ENCODE measurements at regions of chr9 and their contacts with region 1.

Region 1: GRCh38 chr9:33403941-33404787 is 1.8 kb upstream of the AQP7 start:
- DNase-seq: no peak

Region 2: GRCh38 chr9:33187519-33188218 is 216.5 kb before region 1 on chr9:
- CTCF ChIA-PET with region 1: no interaction called
- POLR2A ChIA-PET with region 1: no interaction called
- DNase-seq: no peak

Region 3: GRCh38 chr9:33466565-33467495 is 62.7 kb after region 1 on chr9:
- CTCF ChIA-PET with region 1: interaction called, 12 read pairs
- POLR2A ChIA-PET with region 1: interaction called, 3 read pairs
- DNase-seq: peak; percentile 82

Measured in HEK293T (cell line).